GM12878 (cell line): ENCODE measurements at regions of chr15 and their contacts with region 1.

Region 1: GRCh38 chr15:99631255-99631654 is 65.5 kb downstream of the MEF2A start:
- DNase-seq: peak; percentile 74
- ATAC-seq: peak; percentile 98
- H3K4me3 ChIP-seq: peak overlapping the region; percentile 22; the same call in 1 of the 2 replicates
- H3K27ac ChIP-seq: peak overlapping the region; percentile 93
- H3K4me1 ChIP-seq: peaks cover 13% of the 10 kb centered on the region
- H3K27me3 ChIP-seq: no peaks in the 10 kb centered on the region
- CTCF ChIP-seq: no peak
- EP300 ChIP-seq: peak in 1 of 2 experiments; percentile 84; a peak in 1 of 4 replicates
- POLR2A ChIP-seq: no peak
- RAD21 ChIP-seq: peak; percentile 8; the same call in 1 of the 2 replicates

Region 2: GRCh38 chr15:99326235-99326634 is 305.0 kb before region 1 on chr15:
- CTCF ChIA-PET with region 1: no interaction called
- POLR2A ChIA-PET with region 1: no interaction called
- RAD21 ChIA-PET with region 1: no interaction called
- SMC1A ChIA-PET with region 1: no interaction called
- in situ Hi-C with region 1: no loop called
- intact Hi-C with region 1: no loop called
- DNase-seq: no peak
- ATAC-seq: peak; percentile 52
- H3K4me3 ChIP-seq: no peak overlapping the region
- H3K27ac ChIP-seq: no peak overlapping the region
- H3K4me1 ChIP-seq: no peaks in the 10 kb centered on the region; the same call in 1 of the 2 replicates
- H3K27me3 ChIP-seq: no peaks in the 10 kb centered on the region
- CTCF ChIP-seq: no peak
- EP300 ChIP-seq: no peak
- POLR2A ChIP-seq: no peak
- RAD21 ChIP-seq: no peak

Region 3: GRCh38 chr15:99613887-99614647 is 17.2 kb before region 1 on chr15:
- CTCF ChIA-PET with region 1: interaction called, 13 read pairs
- POLR2A ChIA-PET with region 1: interaction called, 5 read pairs
- RAD21 ChIA-PET with region 1: interaction called, 3 read pairs
- SMC1A ChIA-PET with region 1: interaction called, 17 read pairs
- in situ Hi-C with region 1: no loop called
- intact Hi-C with region 1: no loop called
- DNase-seq: no peak
- ATAC-seq: peak; percentile 69
- H3K4me3 ChIP-seq: no peak overlapping the region
- H3K27ac ChIP-seq: peak overlapping the region; percentile 20; the same call in 1 of the 2 replicates
- H3K4me1 ChIP-seq: peaks cover 20% of the 10 kb centered on the region
- H3K27me3 ChIP-seq: no peaks in the 10 kb centered on the region
- CTCF ChIP-seq: no peak
- EP300 ChIP-seq: no peak
- POLR2A ChIP-seq: no peak
- RAD21 ChIP-seq: no peak

Region 4: GRCh38 chr15:99671926-99672635 is 40.8 kb after region 1 on chr15:
- CTCF ChIA-PET with region 1: no interaction called
- POLR2A ChIA-PET with region 1: interaction called, 3 read pairs
- RAD21 ChIA-PET with region 1: no interaction called
- SMC1A ChIA-PET with region 1: no interaction called
- in situ Hi-C with region 1: no loop called
- intact Hi-C with region 1: loop called (anchors 5 kb)
- DNase-seq: no peak
- ATAC-seq: no peak
- H3K4me3 ChIP-seq: no peak overlapping the region
- H3K27ac ChIP-seq: no peak overlapping the region
- H3K4me1 ChIP-seq: no peaks in the 10 kb centered on the region
- H3K27me3 ChIP-seq: no peaks in the 10 kb centered on the region
- CTCF ChIP-seq: no peak
- EP300 ChIP-seq: no peak
- POLR2A ChIP-seq: no peak
- RAD21 ChIP-seq: no peak